SK-N-SH (cell line): ENCODE measurements at regions of chr13 and their contacts with region 1.

Region 1: GRCh38 chr13:110455941-110456340 is 105.6 kb downstream of the RAB20 start:
- DNase-seq: peak; percentile 91
- H3K4me3 ChIP-seq: peak overlapping the region in 1 of 2 experiments; percentile 34; a peak in 1 of 4 replicates
- H3K27ac ChIP-seq: no peak overlapping the region
- H3K4me1 ChIP-seq: peaks cover 0 to 5% of the 10 kb centered on the region in 2 experiments; a peak in 1 of 4 replicates
- H3K27me3 ChIP-seq: no peaks in the 10 kb centered on the region
- CTCF ChIP-seq: peak; percentile 78
- EP300 ChIP-seq: no peak
- RAD21 ChIP-seq: peak; percentile 82

Region 2: GRCh38 chr13:110220471-110220870 is 235.5 kb before region 1 on chr13:
- CTCF ChIA-PET with region 1: interaction called, 22 read pairs
- POLR2A ChIA-PET with region 1: no interaction called
- DNase-seq: no peak
- H3K4me3 ChIP-seq: no peak overlapping the region
- H3K27ac ChIP-seq: no peak overlapping the region
- H3K4me1 ChIP-seq: peaks cover 12 to 13% of the 10 kb centered on the region in 2 experiments; a peak in 2 of 4 replicates
- H3K27me3 ChIP-seq: no peaks in the 10 kb centered on the region
- CTCF ChIP-seq: no peak
- EP300 ChIP-seq: no peak
- RAD21 ChIP-seq: no peak

Region 3: DNA sequence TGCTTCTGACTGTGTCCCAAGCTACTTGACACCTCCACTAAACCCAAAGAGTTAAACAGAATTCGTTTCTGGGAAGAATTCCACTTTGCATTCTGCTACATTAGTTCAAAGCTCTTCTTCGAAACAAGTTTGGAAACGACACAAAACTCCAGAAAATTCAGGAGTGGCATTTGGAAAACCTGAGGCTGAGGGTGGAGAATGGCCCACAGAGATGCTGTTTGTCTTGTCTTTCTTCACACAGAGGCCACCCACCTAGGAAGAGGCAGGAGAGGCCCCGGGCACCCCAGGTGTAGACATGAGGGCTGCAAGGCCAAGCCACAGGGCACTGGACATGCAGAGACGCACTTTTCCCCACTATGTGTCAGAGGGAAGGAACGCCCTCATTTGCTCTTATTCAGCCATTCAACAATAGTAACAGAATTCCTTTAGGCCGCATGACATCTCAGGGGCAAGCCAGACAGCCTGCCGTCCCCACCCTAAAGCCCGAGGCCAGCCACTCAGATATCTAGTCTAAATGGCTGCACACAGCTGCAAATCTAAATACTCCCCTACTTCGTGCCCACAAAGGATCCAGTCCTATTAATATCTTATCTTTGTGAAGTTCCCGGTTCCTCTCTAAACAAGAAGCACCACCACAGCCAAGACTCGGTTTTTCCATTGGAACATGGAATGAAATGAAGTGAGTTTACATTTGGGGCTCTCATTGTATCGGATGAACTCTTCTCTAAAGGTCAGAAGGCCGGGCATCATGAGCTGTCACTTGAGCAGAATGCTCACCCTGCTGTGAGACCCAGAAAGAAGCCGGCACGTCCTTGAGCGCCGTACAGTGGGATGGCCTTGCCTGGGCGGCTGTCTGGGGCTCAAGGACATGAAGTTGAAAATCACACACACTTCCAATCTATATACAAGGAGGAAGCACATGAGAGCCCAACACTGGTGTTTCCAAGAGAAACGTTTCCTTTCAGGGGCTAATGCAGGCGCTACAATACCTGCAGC is 168.8 kb before region 1 on chr13:
- CTCF ChIA-PET with region 1: no interaction called
- POLR2A ChIA-PET with region 1: no interaction called
- DNase-seq: no peak
- H3K4me3 ChIP-seq: no peak overlapping the region
- H3K27ac ChIP-seq: no peak overlapping the region
- H3K4me1 ChIP-seq: peaks cover 0 to 6% of the 10 kb centered on the region in 2 experiments; a peak in 1 of 4 replicates
- H3K27me3 ChIP-seq: no peaks in the 10 kb centered on the region
- CTCF ChIP-seq: no peak
- EP300 ChIP-seq: no peak
- RAD21 ChIP-seq: no peak

Region 4: DNA sequence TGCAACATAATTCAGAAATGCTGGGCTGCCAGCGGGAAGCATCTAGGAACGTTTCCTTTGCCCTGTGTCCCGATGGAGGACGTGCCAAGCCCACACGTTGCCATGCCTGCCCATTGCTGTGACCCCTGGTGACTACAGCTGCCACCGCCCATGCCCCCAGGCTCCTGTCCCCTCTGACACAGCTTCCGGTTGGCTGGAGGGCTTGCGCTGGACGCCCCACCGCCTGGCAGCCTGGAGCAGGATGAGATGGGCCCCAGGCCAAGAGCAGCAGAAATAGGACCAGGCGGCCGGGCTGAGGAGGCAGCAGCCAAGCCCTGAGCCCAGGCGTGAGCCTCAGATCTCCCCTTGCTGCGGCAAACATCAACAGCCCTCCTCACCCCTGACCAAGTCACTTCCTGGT is 22.9 kb before region 1 on chr13:
- CTCF ChIA-PET with region 1: interaction called, 16 read pairs
- POLR2A ChIA-PET with region 1: interaction called, 3 read pairs
- DNase-seq: peak; percentile 81
- H3K4me3 ChIP-seq: no peak overlapping the region
- H3K27ac ChIP-seq: peak overlapping the region in 1 of 2 experiments; percentile 81; a peak in 3 of 4 replicates
- H3K4me1 ChIP-seq: peaks cover 0 to 26% of the 10 kb centered on the region in 2 experiments; a peak in 2 of 4 replicates
- H3K27me3 ChIP-seq: no peaks in the 10 kb centered on the region
- CTCF ChIP-seq: no peak
- EP300 ChIP-seq: no peak
- RAD21 ChIP-seq: no peak

Region 5: DNA sequence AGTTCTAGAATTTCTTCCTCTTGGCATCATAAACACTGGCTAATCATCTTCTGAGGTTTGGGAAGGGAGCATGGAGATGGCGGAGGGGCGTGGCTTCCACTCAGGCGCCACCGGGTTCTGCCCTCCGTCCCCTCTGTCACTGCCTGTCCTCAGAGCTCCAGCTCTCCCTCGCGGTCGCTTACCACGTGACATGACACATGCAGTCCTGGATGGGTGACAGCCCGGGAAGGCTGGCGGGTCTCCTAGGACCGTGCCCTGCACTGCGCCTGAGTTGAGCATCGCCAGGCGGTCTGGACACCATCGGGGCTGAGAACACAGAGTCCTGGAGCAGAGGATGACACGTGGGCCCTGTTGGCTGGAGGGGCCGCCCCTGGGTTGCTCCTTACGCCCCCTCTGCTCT is 17.7 kb before region 1 on chr13:
- CTCF ChIA-PET with region 1: interaction called, 16 read pairs
- POLR2A ChIA-PET with region 1: no interaction called
- DNase-seq: no peak
- H3K4me3 ChIP-seq: no peak overlapping the region
- H3K27ac ChIP-seq: no peak overlapping the region
- H3K4me1 ChIP-seq: peaks cover 6 to 8% of the 10 kb centered on the region in 2 experiments; a peak in 2 of 4 replicates
- H3K27me3 ChIP-seq: no peaks in the 10 kb centered on the region
- CTCF ChIP-seq: no peak
- EP300 ChIP-seq: no peak
- RAD21 ChIP-seq: no peak

Region 6: GRCh38 chr13:110444226-110444653 is 11.7 kb before region 1 on chr13:
- CTCF ChIA-PET with region 1: interaction called, 16 read pairs
- POLR2A ChIA-PET with region 1: no interaction called
- DNase-seq: no peak
- H3K4me3 ChIP-seq: no peak overlapping the region
- H3K27ac ChIP-seq: no peak overlapping the region; a peak in 1 of 4 replicates
- H3K4me1 ChIP-seq: peaks cover 9 to 12% of the 10 kb centered on the region in 2 experiments; a peak in 3 of 4 replicates
- H3K27me3 ChIP-seq: no peaks in the 10 kb centered on the region
- CTCF ChIP-seq: no peak
- EP300 ChIP-seq: no peak
- RAD21 ChIP-seq: peak; percentile 23; the same call in 1 of the 2 replicates

Region 7: DNA sequence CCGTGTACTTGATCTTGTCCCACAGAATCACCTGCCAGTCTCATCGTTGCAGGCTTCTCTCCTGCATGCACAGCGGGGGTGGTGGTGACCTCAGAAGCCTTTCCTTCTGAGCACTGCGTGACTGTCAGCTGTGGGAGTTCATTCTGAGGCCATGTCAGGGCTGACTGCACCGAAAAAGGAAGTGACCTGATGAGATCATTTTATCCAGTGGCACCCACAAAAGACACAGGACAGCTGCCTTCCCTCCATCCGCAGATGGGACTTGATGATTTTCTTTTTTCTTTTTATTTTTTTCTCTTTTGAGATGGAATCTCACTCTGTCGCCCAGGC is 15.9 kb after region 1 on chr13:
- CTCF ChIA-PET with region 1: interaction called, 15 read pairs
- POLR2A ChIA-PET with region 1: no interaction called
- DNase-seq: no peak
- H3K4me3 ChIP-seq: no peak overlapping the region
- H3K27ac ChIP-seq: peak overlapping the region in 1 of 2 experiments; percentile 85; a peak in 2 of 4 replicates
- H3K4me1 ChIP-seq: peaks cover 0 to 43% of the 10 kb centered on the region in 2 experiments; a peak in 2 of 4 replicates
- H3K27me3 ChIP-seq: no peaks in the 10 kb centered on the region
- CTCF ChIP-seq: no peak
- EP300 ChIP-seq: no peak
- RAD21 ChIP-seq: no peak

Region 8: DNA sequence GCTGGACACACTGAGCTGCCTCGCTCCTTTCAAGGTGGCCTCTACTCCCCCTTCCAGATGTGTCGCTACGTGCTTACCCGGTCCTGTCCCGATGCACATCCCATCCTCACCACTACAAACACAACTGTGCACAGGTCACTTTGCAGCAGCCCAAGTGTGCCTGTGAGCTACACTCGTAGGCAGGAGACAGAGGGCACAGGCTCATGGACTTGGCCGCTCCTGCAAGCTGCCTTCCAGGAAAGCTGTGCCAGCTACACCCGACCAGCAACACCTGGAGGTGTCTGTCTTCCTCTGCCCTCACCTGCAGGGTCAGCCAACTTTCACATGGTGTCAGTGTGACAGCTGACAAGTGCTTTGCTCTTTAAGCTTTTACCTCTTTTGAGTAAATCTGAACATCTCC is 234.6 kb after region 1 on chr13:
- CTCF ChIA-PET with region 1: no interaction called
- POLR2A ChIA-PET with region 1: no interaction called
- DNase-seq: no peak
- H3K4me3 ChIP-seq: no peak overlapping the region
- H3K27ac ChIP-seq: no peak overlapping the region
- H3K4me1 ChIP-seq: no peaks in the 10 kb centered on the region; a peak in 1 of 4 replicates
- H3K27me3 ChIP-seq: no peaks in the 10 kb centered on the region
- CTCF ChIP-seq: no peak
- EP300 ChIP-seq: no peak
- RAD21 ChIP-seq: no peak